Dendritic cell treated with granulocyte-macrophage colony-stimulating factor and Interleukin-4, amounts not matched to agents 40 ng/mL and 50 ng/mL, for 4 days (primary cell): ENCODE measurements at regions of chr19 and their contacts with region 1.

Region 1: DNA sequence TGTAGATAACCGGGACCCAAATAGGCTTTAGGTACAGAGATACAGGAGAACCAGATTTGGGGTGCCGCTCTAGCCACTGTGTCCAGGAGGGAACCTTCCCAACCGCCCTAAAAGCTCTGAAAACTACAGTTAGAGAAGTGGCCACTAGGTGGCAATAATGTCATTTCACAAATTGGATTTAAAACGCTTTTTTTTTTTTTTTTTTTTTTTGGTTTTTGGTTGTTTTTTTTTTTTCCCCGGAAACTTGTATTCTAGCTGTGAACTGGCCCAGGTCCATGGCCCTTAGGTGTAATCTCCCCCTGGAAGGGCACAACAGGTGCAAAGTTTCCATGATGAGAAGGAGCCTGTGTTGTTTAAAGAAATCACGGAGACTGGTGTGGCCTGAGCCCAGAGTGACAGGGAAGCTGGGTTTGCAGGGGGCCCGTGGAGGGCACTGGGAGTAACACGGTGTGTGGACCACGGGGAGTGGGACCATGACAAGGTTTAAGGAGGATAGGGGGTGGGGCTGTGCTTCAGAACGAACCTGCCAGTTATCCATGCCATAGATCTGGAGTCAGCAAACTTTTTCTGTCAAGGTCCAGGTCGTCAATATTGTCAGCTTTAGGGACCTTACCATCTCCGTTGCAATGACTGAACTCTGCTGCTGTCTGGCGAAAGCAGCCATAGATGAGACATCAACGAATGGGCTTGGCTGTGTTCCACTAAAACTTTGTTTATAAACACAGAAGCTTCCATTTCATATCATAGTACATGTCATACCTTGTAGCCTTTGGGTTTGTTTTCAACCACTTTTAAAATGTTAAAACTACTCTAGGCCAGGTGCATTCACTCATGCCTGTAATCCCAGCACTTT is 10.1 kb downstream of the OR1I1 start:
- H3K4me3 Mint-ChIP-seq: no peak overlapping the region
- H3K27ac Mint-ChIP-seq: no peak overlapping the region
- H3K4me1 Mint-ChIP-seq: peaks cover 7% of the 10 kb centered on the region
- H3K27me3 Mint-ChIP-seq: peaks cover 7% of the 10 kb centered on the region

Region 2: DNA sequence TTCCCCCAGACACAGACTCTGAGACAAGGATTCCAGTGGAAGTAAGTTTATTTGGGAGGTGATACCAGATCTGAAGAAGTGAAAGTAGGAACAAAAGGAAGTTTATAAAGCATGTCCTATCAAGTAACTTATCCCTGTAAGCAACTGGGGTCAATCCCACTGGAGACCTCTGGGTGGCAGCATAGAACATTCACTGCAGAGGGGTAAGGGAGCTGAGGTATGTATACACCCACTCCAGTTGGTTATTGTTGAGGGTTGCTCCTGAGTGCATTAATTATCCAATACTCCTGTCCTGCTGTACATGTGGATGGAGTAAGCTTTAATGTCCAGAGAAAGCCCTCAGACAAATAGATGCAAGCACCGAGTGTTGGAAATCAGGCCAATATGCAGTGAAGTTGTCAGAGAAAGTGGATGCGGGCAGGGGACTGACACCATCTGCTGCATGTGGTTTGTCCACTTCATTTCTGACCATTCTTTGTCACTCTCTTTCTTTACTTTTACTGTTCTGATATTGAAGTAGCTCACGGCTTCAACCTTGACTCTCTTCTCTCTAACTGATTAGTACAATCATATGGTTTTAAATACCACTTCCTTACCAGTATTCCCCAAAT is 62.0 kb after region 1 on chr19:
- intact Hi-C with region 1: loop called (anchors 1 kb)
- H3K4me3 Mint-ChIP-seq: no peak overlapping the region
- H3K27ac Mint-ChIP-seq: no peak overlapping the region
- H3K4me1 Mint-ChIP-seq: peaks cover 20% of the 10 kb centered on the region
- H3K27me3 Mint-ChIP-seq: peaks cover 4% of the 10 kb centered on the region

Region 3: DNA sequence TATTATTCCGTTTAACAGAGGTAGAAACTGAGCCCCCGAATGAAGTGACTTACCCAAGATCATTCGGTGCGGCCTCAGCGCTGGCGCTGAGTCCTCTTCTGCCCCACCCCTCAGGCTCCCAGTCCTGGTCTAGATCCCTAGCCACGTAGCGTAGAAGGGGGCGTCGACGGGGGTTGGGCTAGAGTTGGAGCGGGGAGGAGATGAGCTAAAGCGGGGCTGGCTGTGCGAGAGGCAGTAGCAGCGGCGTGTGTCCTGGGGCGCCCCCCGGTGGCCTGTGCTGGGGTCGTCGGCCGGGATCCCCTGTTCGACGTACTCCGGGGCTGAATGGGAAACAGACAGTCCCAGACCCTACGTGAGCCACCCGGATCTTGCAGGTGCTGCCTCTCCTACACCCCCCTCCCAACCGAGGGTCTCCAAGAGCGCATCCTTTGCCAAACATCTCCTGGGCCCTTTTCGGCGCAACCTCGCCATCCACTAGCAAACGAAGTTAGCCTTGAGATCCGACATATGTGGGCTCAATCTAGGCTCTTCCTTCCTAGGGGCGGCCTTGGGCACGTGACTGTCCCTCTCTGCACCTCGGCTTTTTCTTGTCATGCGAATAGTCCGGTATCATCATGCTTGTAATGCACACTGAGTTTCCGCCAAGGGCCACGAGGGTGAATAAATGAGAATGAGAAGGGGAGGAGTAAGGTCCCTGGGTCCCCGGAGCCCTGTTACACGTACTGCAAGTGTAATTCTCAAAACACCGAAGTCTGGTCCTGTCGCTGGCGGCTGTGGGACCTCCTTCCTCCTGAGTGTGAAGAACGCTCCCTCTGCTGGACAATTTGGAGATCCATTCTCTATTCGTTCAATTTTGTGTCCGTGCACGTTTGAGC is 463.9 kb after region 1 on chr19:
- intact Hi-C with region 1: loop called (anchors 2 kb)
- H3K4me3 Mint-ChIP-seq: peak overlapping the region; percentile 75
- H3K27ac Mint-ChIP-seq: peak overlapping the region; percentile 41
- H3K4me1 Mint-ChIP-seq: peaks cover 18% of the 10 kb centered on the region
- H3K27me3 Mint-ChIP-seq: peaks cover 45% of the 10 kb centered on the region